AG04450 (cell line): ENCODE measurements at regions of chr9 and their contacts with region 1.

Region 1: GRCh38 chr9:72753266-72753893 is 199.5 kb downstream of the ALDH1A1 start:
- DNase-seq: no peak
- H3K4me3 ChIP-seq: no peak overlapping the region
- H3K27ac ChIP-seq: no peak overlapping the region
- H3K27me3 ChIP-seq: no peaks in the 10 kb centered on the region
- CTCF ChIP-seq: peak; percentile 46

Region 2: DNA sequence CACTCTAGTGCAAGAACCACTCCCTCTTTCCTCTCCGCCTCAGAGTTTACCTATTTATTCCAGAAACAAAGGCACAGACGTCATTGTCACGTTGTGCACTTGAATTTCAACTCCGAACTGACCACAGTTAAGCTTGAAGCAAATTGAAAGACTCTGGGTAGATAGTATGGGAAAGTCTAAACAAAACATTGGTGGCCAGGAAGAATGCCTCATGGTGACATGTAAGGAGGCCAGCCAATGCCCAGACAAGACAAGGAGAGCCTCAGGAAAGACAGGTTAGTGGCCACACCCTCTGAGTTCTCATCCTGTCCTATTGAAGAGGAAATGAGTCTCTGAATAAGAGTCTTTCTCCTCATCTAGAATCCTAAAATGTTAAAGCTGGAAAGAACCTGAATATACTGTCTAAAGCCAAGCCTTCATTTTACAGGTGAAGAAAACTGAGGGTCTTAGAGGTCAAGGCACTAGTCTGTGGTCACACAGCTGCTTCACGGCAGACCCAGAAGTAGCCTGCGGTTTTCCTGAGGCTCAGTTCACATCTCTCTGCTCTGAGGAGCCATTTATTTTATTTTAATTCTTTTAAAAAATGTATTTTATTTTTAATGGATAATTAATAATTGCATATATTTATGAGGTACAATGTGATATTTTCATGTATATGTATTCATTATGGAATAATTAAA is 418.6 kb before region 1 on chr9:
- CTCF ChIA-PET with region 1: interaction called, 12 read pairs
- POLR2A ChIA-PET with region 1: no interaction called
- DNase-seq: no peak
- H3K4me3 ChIP-seq: no peak overlapping the region
- H3K27ac ChIP-seq: no peak overlapping the region
- H3K27me3 ChIP-seq: peaks cover 3% of the 10 kb centered on the region
- CTCF ChIP-seq: no peak